Posterior vena cava (tissue), 2 donors: ENCODE measurements at regions of chr15 and their contacts with region 1.

Region 1: GRCh38 chr15:55846116-55846707 is 103.3 kb upstream of the PRTG start:
- DNase-seq: no peak

Region 2: GRCh38 chr15:55649054-55649423 is 197.2 kb before region 1 on chr15:
- intact Hi-C with region 1: loop called in 1 of 2 experiments (anchors 10 kb)
- DNase-seq: no peak